PC-3 (cell line): ENCODE measurements at regions of chr3 and their contacts with region 1.

Region 1: DNA sequence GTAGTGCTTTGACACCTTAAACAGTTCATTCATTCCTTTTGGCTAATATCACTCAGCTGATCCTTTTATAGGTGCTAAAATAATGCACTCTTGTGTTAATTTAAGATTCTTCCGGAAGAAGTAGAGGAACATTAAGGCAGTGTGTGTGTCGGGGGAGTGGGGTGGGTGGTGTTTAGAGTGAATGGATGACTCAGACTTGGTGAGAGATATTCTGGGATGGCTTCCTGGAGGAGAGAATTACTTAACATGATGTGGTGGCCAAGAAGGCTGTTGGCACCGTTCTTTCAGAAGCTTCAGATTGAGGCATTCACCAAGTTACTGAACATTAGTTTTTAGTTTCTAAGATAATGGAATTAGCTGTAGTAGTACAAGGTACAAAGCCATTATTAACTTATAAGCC is 125.6 kb upstream of the ROPN1 start:
- DNase-seq: peak; percentile 73
- ATAC-seq: peak; percentile 16; the same call in 1 of the 2 replicates
- H3K4me3 ChIP-seq: no peak overlapping the region
- H3K27ac ChIP-seq: peak overlapping the region; percentile 95
- H3K4me1 ChIP-seq: peaks cover 35% of the 10 kb centered on the region
- H3K27me3 ChIP-seq: no peaks in the 10 kb centered on the region
- CTCF ChIP-seq: no peak

Region 2: GRCh38 chr3:123229145-123229544 is 888.3 kb before region 1 on chr3:
- CTCF ChIA-PET with region 1: no interaction called
- POLR2A ChIA-PET with region 1: interaction called, 14 read pairs
- intact Hi-C with region 1: no loop called
- DNase-seq: no peak
- ATAC-seq: no peak
- H3K4me3 ChIP-seq: no peak overlapping the region
- H3K27ac ChIP-seq: no peak overlapping the region
- H3K4me1 ChIP-seq: no peaks in the 10 kb centered on the region
- H3K27me3 ChIP-seq: no peaks in the 10 kb centered on the region
- CTCF ChIP-seq: no peak

Region 3: GRCh38 chr3:124101643-124102042 is 15.8 kb before region 1 on chr3:
- CTCF ChIA-PET with region 1: no interaction called
- POLR2A ChIA-PET with region 1: no interaction called
- intact Hi-C with region 1: no loop called
- DNase-seq: no peak
- ATAC-seq: no peak
- H3K4me3 ChIP-seq: no peak overlapping the region
- H3K27ac ChIP-seq: no peak overlapping the region
- H3K4me1 ChIP-seq: 0 out of 2 replicates have a peak, but pooled peaks cover 5% of the 10 kb centered on the region
- H3K27me3 ChIP-seq: 0 out of 2 replicates have a peak, but pooled peaks cover 4% of the 10 kb centered on the region
- CTCF ChIP-seq: no peak

Region 4: DNA sequence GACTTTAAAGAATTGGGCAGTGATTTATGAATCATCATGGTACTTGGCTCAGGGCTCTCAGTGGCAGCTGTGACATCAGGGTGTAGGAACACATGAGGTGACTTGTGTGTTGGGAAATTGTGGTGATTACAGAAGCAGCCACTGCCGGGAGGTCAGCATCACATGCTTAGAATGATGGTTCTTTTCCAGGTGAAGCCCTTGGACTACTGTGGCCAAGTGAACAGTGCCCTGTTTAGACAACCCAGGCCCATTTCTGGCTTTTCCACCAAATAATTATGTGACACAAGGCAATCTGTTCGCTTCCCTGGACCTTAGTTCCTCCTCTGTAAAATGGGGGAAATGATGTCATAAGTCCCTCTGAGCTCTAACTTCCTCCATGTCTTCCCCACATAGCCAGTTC is 14.1 kb after region 1 on chr3:
- CTCF ChIA-PET with region 1: no interaction called
- POLR2A ChIA-PET with region 1: no interaction called
- intact Hi-C with region 1: loop called (anchors 1 kb)
- DNase-seq: peak; percentile 61
- ATAC-seq: peak; percentile 40; the same call in 1 of the 2 replicates
- H3K4me3 ChIP-seq: no peak overlapping the region
- H3K27ac ChIP-seq: no peak overlapping the region
- H3K4me1 ChIP-seq: peaks cover 8% of the 10 kb centered on the region
- H3K27me3 ChIP-seq: no peaks in the 10 kb centered on the region
- CTCF ChIP-seq: no peak

Region 5: DNA sequence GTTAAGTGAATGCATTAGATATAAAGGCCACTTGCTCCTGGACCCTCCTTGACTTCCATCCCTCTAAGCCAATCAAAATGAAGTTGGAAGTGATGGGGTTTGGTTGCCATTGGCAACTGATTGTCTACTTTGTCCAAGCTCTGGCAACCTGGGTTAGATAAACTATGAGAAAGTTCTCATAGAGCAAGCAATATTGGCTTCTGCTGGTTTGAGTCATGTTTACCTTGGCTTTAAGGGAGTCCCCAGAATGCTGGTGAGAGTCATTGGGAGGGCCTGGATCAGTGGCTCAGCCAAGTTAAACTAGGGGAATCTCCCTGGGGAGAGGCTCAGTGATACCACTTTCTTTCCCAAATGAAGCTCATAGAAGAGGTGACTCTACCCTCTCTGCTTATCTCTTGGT is 50.8 kb after region 1 on chr3:
- CTCF ChIA-PET with region 1: no interaction called
- POLR2A ChIA-PET with region 1: no interaction called
- intact Hi-C with region 1: loop called (anchors 1 kb)
- DNase-seq: peak; percentile 71
- ATAC-seq: peak; percentile 96
- H3K4me3 ChIP-seq: no peak overlapping the region
- H3K27ac ChIP-seq: no peak overlapping the region
- H3K4me1 ChIP-seq: peaks cover 4% of the 10 kb centered on the region; the same call in 1 of the 2 replicates
- H3K27me3 ChIP-seq: no peaks in the 10 kb centered on the region
- CTCF ChIP-seq: no peak

Region 6: GRCh38 chr3:124246949-124247348 is 129.5 kb after region 1 on chr3:
- CTCF ChIA-PET with region 1: no interaction called
- POLR2A ChIA-PET with region 1: interaction called, 5 read pairs
- intact Hi-C with region 1: loop called (anchors 5 kb)
- DNase-seq: peak; percentile 62
- ATAC-seq: peak; percentile 61
- H3K4me3 ChIP-seq: no peak overlapping the region
- H3K27ac ChIP-seq: no peak overlapping the region
- H3K4me1 ChIP-seq: peaks cover 14% of the 10 kb centered on the region
- H3K27me3 ChIP-seq: 0 out of 2 replicates have a peak, but pooled peaks cover 4% of the 10 kb centered on the region
- CTCF ChIP-seq: peak; percentile 88

Region 7: DNA sequence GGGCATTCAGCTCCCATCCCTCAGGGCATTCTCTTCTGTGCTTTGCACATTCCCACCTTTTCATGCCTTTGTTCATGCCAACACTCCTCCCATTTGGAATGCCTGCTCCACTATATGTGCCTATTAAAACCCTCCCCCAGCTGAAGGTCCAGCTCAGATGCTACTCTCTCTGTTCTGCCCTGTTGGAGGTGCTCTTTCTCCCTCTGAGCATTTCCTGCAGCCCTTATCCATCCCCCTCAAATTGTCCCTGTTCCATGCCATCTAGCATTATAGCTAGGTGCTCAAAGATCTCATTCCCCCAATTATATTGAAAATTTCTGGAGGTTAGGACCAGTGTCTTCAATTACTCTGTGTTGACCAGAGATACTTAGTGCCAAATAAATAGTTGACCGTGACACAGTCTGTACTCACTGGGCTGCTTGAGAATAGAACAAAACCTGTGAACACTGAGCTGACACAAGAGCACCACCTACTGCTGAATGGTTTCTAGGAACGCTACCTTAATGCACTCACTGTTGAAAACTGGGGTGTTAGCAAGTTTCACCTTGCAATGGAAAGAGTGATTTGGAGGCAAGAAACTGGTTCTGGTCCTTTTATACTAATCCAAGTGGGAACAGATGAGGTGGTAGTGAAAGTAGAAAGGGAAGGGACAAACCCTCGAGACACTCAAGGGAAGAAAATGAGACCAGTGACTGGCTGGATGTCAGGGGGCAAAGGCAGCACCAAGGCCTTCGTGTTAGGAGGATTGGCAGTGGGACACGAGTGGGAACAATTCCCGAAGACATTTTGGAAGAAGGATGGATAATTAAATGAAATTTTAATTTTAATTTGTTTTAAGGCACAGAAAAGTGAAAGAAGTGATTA is 164.2 kb after region 1 on chr3:
- CTCF ChIA-PET with region 1: no interaction called
- POLR2A ChIA-PET with region 1: no interaction called
- intact Hi-C with region 1: loop called (anchors 1 kb)
- DNase-seq: peak; percentile 74
- ATAC-seq: peak; percentile 91
- H3K4me3 ChIP-seq: no peak overlapping the region
- H3K27ac ChIP-seq: no peak overlapping the region
- H3K4me1 ChIP-seq: no peaks in the 10 kb centered on the region
- H3K27me3 ChIP-seq: peaks cover 20% of the 10 kb centered on the region
- CTCF ChIP-seq: peak; percentile 96